Activated CD4-positive, alpha-beta T cell treated with anti-CD3 and anti-CD28 coated beads for 36 hours (primary cell): ENCODE measurements at regions of chr1 and their contacts with region 1.

Region 1: DNA sequence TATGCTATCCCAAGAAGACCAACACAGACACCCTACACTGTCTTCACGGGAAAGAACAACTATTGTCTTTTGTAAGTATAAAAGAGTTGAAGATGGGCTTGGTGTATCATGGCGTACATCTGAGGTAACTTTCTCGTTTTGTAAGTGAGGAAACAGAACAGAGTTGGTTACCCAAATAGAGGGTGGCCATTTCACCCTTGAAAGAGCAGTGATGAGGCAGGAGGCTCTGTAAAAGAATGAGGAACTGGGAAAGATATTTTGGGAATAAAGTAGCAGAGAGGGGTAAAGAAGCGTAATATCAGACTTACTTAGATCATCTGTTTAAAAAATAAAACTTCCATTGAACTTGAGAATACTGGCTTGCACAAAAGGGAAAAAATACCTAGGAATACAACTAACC is 18.9 kb downstream of the FCRL2 start:
- DNase-seq: no peak
- ATAC-seq: no peak
- H3K4me3 Mint-ChIP-seq: no peak overlapping the region
- H3K27ac Mint-ChIP-seq: no peak overlapping the region
- H3K4me1 Mint-ChIP-seq: no peaks in the 10 kb centered on the region
- H3K27me3 Mint-ChIP-seq: peaks cover 7% of the 10 kb centered on the region

Region 2: GRCh38 chr1:157704878-157705277 is 53.1 kb before region 1 on chr1:
- CTCF ChIA-PET with region 1: no interaction called
- POLR2A ChIA-PET with region 1: no interaction called
- intact Hi-C with region 1: loop called in 1 of 2 experiments (anchors 5 kb)
- DNase-seq: no peak
- ATAC-seq: no peak
- H3K4me3 Mint-ChIP-seq: no peak overlapping the region
- H3K27ac Mint-ChIP-seq: no peak overlapping the region
- H3K4me1 Mint-ChIP-seq: peaks cover 2% of the 10 kb centered on the region
- H3K27me3 Mint-ChIP-seq: peaks cover 4% of the 10 kb centered on the region